Cardiac septum (tissue), 1 donor: ENCODE measurements at regions of chr3 and their contacts with region 1.

Region 1: DNA sequence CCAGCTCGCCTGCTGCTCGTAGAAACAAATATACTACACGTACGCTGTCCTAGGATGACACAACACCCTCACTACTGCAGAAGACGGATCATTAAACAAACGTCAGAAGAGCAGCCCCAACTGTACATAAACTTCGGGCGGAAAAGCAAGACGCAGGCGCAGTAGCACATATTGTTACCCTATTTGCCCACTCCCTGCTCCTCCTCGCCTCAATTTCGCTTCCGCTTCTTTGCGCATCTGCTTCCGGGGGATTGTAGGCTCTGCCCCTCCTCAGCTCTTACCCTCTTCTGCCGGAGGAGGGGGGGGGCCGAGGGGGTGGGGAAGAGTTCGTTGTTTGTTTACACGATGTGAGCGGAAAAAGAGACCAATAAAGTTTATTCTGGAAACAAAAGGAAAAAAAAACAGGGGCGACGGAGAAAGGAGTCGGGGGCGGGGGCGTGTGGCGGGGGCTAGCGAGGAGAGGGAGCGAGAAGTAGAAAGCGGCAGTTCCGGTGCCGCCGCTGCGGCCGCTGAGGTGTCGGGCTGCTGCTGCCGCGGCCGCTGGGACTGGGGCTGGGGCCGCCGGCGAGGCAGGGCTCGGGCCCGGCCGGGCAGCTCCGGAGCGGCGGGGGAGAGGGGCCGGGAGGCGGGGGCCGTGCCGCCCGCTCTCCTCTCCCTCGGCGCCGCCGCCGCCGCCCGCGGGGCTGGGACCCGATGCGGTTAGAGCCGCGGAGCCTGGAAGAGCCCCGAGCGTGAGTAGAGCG is at the start of gene PIK3CA:
- DNase-seq: peak; percentile 98
- total RNA-seq, gene PIK3CA: 28.8 TPM

Region 2: DNA sequence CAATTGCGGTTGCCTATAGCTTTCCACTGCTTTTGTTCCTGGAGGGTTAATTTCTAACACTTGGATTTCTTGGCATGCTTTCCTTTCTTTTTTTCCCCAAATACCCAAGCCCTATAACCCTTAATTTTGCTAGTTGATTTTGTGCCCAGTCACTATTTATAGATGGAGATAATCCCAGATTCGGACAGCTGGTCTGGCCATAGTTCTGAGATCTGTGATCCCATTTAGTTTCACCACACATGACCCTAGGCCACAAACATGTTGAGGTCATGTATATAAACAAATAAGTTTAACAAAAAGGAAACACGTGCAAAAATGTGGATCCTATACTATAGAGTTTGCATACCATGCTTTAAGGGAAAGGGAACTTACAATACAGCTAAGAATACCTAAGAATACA is 187.9 kb before region 1 on chr3:
- intact Hi-C with region 1: no loop called
- DNase-seq: no peak

Region 3: GRCh38 chr3:179000144-179000543 is 147.9 kb before region 1 on chr3:
- intact Hi-C with region 1: no loop called
- DNase-seq: no peak

Region 4: GRCh38 chr3:179015551-179016020 is 132.5 kb before region 1 on chr3:
- intact Hi-C with region 1: loop called (anchors 5 kb)
- DNase-seq: no peak

Region 5: GRCh38 chr3:179071550-179072397 is 76.3 kb before region 1 on chr3 and contains the start of gene ZMAT3:
- intact Hi-C with region 1: loop called (anchors 1 kb)
- DNase-seq: peak; percentile 95
- total RNA-seq, gene ZMAT3: 18.3 TPM

Region 6: GRCh38 chr3:179181021-179181472 is 33.0 kb after region 1 on chr3:
- intact Hi-C with region 1: loop called (anchors 5 kb)
- DNase-seq: no peak

Region 7: GRCh38 chr3:179260949-179261765 is 113.1 kb after region 1 on chr3:
- intact Hi-C with region 1: loop called (anchors 2 kb)
- DNase-seq: peak; percentile 89

Region 8: GRCh38 chr3:179322286-179323196 is 174.5 kb after region 1 on chr3 and contains the start of gene ZNF639:
- intact Hi-C with region 1: loop called (anchors 1 kb)
- DNase-seq: peak; percentile 88
- total RNA-seq, gene ZNF639: 25.5 TPM

Region 9: DNA sequence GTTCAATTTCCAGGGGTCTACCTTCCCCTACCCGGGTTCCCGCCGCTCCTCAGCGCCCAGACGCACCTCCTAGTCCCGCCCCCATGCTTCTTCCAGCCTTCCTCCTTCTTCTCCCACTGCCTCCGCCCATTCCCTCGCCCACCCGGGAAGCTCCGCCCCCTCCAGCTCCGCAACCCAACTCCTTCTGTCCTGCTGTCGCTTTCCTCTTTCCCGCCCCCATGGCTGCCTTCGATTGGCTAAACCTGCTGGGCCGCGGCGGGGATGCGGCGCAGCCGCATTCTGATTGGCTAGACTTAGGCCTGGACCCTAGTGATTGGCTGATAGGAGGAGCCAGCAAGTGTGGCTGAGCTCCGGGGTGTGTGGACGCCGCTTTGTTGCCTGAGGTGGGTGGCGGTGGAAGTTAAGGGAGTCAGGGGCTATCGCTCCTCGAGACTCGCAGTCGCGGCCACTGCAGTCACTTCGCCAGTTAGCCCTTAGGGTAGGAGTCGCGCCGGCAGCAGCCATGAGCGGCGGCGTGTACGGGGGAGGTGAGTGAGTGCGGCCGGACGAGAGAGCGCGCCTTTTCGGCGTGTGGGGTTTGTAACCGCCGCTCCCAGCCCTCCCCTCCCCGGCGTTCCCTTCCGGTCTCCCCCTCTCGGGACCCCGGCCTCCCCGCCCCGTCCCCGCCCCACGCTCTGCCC is 414.7 kb after region 1 on chr3 and contains the start of gene ACTL6A:
- intact Hi-C with region 1: loop called (anchors 5 kb)
- DNase-seq: peak; percentile 100
- total RNA-seq, gene ACTL6A: 14.4 TPM